ENCODE measurements at regions of chr1 and their contacts with region 1.

Region 1: GRCh38 chr1:212665241-212666115 is 34.2 kb downstream of the BATF3 start:
- DNase-seq: peak; percentile 90 to 95
- ATAC-seq: peak; percentile 97
- H3K4me3 ChIP-seq: peak overlapping the region; percentile 17 to 62
- H3K27ac ChIP-seq: peak overlapping the region in 1 of 2 donors; percentile 68
- H3K4me1 ChIP-seq: no peaks in the 10 kb centered on the region
- H3K27me3 ChIP-seq: no peaks in the 10 kb centered on the region

Region 2: GRCh38 chr1:212353181-212353580 is 312.3 kb before region 1 on chr1:
- intact Hi-C with region 1: no loop called
- DNase-seq: no peak
- ATAC-seq: no peak
- H3K4me3 ChIP-seq: no peak overlapping the region
- H3K27ac ChIP-seq: no peak overlapping the region
- H3K4me1 ChIP-seq: no peaks in the 10 kb centered on the region
- H3K27me3 ChIP-seq: no peaks in the 10 kb centered on the region

Region 3: DNA sequence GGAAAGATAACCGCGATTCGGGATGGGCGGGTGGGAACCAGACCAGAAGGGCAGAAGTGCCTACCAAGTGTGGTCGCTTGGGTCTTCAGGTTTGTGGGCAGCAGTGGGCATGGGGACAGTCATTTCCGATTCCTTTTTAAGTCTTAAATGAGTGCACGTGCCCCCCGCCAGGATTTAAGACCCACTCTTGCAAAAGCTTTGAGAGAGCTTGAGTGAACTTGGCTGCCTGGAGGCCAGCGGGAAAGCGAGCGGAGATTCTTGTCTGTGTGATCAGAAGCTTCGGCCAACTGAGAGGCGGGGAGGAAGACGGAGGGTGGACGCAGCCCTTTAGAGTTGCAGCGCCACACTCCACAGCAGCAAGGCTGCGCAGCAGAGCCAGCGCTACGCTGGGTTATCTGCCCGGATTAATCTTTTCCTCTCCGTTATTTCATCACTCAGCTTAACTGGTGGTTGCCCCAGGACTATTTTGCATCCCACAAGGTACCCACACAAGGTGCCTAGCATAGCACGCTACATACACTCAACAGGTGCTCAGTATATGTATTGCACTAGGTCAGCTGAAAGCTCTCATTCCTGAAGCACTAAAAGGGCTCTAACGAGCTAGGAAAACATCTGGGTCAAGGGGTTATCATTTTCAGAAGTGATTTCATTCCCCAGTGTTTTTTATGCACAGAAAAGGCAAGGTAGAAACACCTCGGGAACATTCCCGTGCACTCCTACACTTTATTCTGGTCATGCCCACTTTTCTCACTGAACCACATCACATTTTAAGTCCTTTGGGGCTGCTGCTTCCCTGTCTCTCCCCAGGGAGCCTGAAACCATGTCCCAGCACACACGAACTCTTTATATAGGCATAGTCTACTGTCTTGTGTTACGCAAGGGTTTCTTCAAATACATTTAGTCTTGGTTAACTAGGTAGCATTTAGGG is 35.7 kb after region 1 on chr1:
- intact Hi-C with region 1: loop called in 1 of 2 experiments (anchors 5 kb)
- DNase-seq: peak; percentile 74 to 85
- ATAC-seq: peak; percentile 79
- H3K4me3 ChIP-seq: peak overlapping the region; percentile 43 to 71
- H3K27ac ChIP-seq: peak overlapping the region in 1 of 2 donors; percentile 23
- H3K4me1 ChIP-seq: no peaks in the 10 kb centered on the region
- H3K27me3 ChIP-seq: no peaks in the 10 kb centered on the region

Region 4: DNA sequence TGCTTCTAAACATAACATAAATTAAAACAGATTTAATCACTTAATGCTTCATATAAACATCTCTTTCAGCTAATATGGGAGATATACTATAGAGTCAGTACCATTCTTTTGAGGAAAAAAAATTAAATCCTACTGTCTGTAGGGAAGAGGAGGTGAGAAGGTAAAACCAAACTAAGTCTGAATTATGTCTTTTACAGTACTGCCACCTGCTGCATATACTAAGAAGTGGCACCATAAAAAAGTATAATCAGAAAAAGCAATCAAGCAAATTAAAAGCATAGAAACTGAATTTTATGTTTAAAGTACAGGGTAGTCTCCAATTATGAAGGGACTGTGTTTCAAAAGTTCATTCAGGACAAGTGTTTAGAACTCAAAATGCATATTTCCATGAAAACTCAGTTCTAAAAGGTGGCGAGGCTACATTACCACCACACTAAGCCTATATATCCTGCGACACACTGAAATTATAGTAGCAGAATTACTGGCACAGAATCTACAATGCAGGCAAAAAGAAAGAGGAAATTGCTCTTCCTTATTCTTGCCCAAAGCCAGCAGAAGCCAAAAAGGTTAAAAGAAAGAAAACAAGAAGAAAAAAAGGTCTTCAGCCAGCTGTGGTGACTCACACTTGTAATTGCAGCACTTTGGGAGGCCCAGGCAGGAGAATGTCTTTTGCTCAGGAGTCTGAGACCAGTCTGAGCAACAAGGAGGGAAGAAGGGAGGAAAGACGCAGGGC is 117.1 kb after region 1 on chr1:
- intact Hi-C with region 1: loop called (anchors 2 to 5 kb)
- DNase-seq: no peak
- ATAC-seq: no peak
- H3K4me3 ChIP-seq: no peak overlapping the region
- H3K27ac ChIP-seq: no peak overlapping the region
- H3K4me1 ChIP-seq: no peaks in the 10 kb centered on the region
- H3K27me3 ChIP-seq: no peaks in the 10 kb centered on the region

Measured in aorta (tissue), 5 donors.